ENCODE measurements at regions of chr19 and their contacts with region 1.

Region 1: GRCh38 chr19:1260636-1261537 is 8.2 kb upstream of the CIRBP start:
- DNase-seq: peak; percentile 99
- ATAC-seq: peak; percentile 76
- H3K4me3 Mint-ChIP-seq: peak overlapping the region; percentile 98
- H3K27ac Mint-ChIP-seq: peak overlapping the region; percentile 99
- H3K4me1 Mint-ChIP-seq: peaks cover 37% of the 10 kb centered on the region
- H3K27me3 Mint-ChIP-seq: no peaks in the 10 kb centered on the region

Region 2: GRCh38 chr19:1213391-1214286 is 47.2 kb before region 1 on chr19:
- POLR2A ChIA-PET with region 1: no interaction called
- DNase-seq: peak; percentile 52
- ATAC-seq: peak; percentile 83
- H3K4me3 Mint-ChIP-seq: peak overlapping the region; percentile 79
- H3K27ac Mint-ChIP-seq: peak overlapping the region; percentile 96
- H3K4me1 Mint-ChIP-seq: peaks cover 22% of the 10 kb centered on the region
- H3K27me3 Mint-ChIP-seq: no peaks in the 10 kb centered on the region

Region 3: GRCh38 chr19:1241417-1242095 is 19.3 kb before region 1 on chr19 and contains the start of gene ATP5F1D:
- POLR2A ChIA-PET with region 1: interaction called, 385 read pairs
- DNase-seq: peak; percentile 92
- ATAC-seq: peak; percentile 75
- H3K4me3 Mint-ChIP-seq: peak within 1 kb of the TSS; percentile 85
- H3K27ac Mint-ChIP-seq: peak within 1 kb of the TSS; percentile 93
- H3K4me1 Mint-ChIP-seq: peaks cover 24% of the 10 kb centered on the region
- H3K27me3 Mint-ChIP-seq: peaks cover 15% of the 10 kb centered on the region
- total RNA-seq, gene ATP5F1D: 157 to 161 TPM

Region 4: DNA sequence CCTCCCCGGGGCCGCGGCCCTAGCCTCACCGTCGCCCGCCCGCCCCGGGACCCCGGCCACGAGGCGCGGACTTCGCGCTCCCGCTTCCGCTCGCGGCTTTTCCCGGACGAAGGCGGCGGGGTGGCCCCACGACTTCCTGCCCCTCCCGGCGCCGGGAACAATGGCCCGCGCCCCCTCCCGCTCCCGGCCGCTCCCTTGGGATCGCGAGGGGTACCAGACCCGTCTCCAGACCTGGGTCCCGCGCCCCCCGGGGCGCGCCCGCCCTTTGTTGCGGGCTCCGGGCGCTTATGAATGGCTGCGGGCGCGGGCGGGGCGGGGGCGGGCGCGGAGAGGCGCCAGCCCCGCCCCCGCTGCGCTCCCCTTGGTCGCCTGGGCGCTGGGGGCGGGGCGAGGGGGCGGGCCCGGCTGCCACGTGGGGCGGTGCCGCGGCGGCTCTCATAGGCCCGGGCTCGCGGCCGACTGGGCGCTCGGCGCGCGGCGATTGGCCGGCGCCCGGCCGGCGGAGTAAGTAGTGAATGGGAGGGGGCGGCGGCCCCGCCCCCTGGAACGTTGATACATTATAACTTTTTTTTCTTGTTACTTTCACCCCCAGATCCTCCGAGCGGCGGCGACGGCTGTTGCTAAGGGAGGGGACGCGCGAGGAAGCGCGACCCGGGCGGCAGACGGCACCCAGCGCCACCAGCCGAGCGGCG is 11.4 kb before region 1 on chr19:
- POLR2A ChIA-PET with region 1: interaction called, 385 read pairs
- DNase-seq: peak; percentile 94
- ATAC-seq: peak; percentile 47
- H3K4me3 Mint-ChIP-seq: peak overlapping the region; percentile 82
- H3K27ac Mint-ChIP-seq: peak overlapping the region; percentile 82
- H3K4me1 Mint-ChIP-seq: peaks cover 7% of the 10 kb centered on the region
- H3K27me3 Mint-ChIP-seq: no peaks in the 10 kb centered on the region

Region 5: DNA sequence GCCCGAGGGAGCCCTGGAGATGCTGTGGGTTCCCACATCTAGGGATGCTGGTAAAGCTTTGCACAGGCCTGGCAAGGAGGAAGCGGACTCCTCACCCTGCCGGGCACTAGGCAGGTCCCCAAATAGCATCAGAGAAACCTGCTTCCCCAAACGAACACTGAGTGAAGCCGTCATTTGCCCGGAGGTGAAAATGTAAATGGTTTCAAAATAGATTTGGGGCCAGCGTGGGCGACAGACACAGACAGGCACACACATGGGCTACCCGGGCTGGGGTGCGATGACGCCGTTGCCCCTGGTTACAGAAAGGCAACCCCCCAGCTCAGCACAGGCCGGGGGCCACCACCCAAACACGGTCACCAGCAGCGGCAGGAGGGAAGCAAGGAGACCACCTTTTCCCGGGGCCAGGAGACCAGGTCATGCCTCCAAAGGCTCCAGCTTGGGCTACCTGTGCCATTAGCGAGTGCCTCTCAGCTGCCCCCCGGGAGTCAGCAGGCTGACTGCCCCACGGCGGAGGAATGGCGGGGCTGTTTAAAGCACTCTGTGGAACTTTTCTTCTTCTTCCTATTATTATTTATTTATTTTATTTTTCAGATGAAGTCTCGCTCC is 75.3 kb after region 1 on chr19:
- POLR2A ChIA-PET with region 1: no interaction called
- DNase-seq: no peak
- ATAC-seq: no peak
- H3K4me3 Mint-ChIP-seq: no peak overlapping the region
- H3K27ac Mint-ChIP-seq: no peak overlapping the region
- H3K4me1 Mint-ChIP-seq: no peaks in the 10 kb centered on the region
- H3K27me3 Mint-ChIP-seq: peaks cover 5% of the 10 kb centered on the region

Measured in activated naive CD8-positive, alpha-beta T cell treated with anti-CD3 and anti-CD28 coated beads, Interleukin-2, amount 10 ng/mL, durations not matched to agents 7 days and 5 days (primary cell).